CD4-positive, alpha-beta memory T cell (primary cell): ENCODE measurements at regions of chr4 and their contacts with region 1.

Region 1: GRCh38 chr4:184649026-184649970 is at the starts of genes CASP3 and PRIMPOL:
- DNase-seq: peak; percentile 92 to 95 (median 94)
- H3K4me3 ChIP-seq: peak within 1 kb of the TSS; percentile 81 to 85
- H3K4me3 Mint-ChIP-seq: peak within 1 kb of the TSS; percentile 92 to 98 (median 96)
- H3K27ac ChIP-seq: peak within 1 kb of the TSS; percentile 88
- H3K27ac Mint-ChIP-seq: peak within 1 kb of the TSS; percentile 90 to 97 (median 95)
- H3K4me1 ChIP-seq: peaks cover 51% of the 10 kb centered on the region
- H3K4me1 Mint-ChIP-seq: peaks cover 46 to 54% (median 50%) of the 10 kb centered on the region in 4 donors
- H3K27me3 ChIP-seq: no peaks in the 10 kb centered on the region
- H3K27me3 Mint-ChIP-seq: no peaks in the 10 kb centered on the region
- total RNA-seq, gene CASP3: 17.9 to 24.9 TPM
- total RNA-seq, gene PRIMPOL: 20.2 to 23.2 TPM

Region 2: GRCh38 chr4:184310171-184310567 is 339.1 kb before region 1 on chr4:
- CTCF ChIA-PET with region 1: interaction called, 3 read pairs
- POLR2A ChIA-PET with region 1: interaction called, 3 read pairs
- intact Hi-C with region 1: loop called (anchors 1 kb)
- DNase-seq: peak; percentile 46 to 61 (median 48)
- H3K4me3 ChIP-seq: no peak overlapping the region
- H3K4me3 Mint-ChIP-seq: peak overlapping the region in 7 of 8 donors; percentile 27 to 63 (median 53)
- H3K27ac ChIP-seq: no peak overlapping the region
- H3K27ac Mint-ChIP-seq: peak overlapping the region; percentile 17 to 94 (median 71)
- H3K4me1 ChIP-seq: peaks cover 15% of the 10 kb centered on the region
- H3K4me1 Mint-ChIP-seq: peaks cover 18 to 29% (median 24%) of the 10 kb centered on the region in 4 donors
- H3K27me3 ChIP-seq: no peaks in the 10 kb centered on the region
- H3K27me3 Mint-ChIP-seq: no peaks in the 10 kb centered on the region

Region 3: DNA sequence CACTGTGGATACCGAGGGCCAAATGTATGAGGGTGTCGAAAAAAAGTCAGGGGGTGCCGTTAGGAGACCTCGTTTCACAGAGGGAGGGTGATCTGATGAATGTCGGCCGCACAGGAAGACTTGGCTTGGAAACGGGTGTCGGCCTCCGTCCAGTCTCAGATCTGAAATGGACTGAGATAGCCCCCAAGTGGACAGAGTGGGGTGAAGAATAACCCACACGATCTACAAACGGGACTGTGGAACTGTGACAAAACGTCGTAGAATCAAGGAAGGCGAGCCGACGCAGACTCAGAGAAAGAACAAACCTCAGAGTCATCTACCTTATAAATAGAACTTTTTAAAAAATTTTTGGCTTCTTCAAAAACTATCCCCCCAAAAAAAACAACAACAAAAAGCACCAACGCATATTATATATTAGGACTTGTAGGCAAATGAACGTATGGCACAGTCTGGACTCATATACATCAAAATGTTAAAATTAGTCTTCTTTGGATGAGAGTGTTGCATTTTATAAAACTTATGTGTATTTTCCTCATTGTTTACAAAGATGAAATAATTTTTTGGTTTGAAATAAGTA is 111.2 kb before region 1 on chr4:
- CTCF ChIA-PET with region 1: interaction called, 4 read pairs
- POLR2A ChIA-PET with region 1: interaction called, 38 read pairs
- intact Hi-C with region 1: loop called (anchors 1 kb)
- DNase-seq: peak; percentile 59 to 71 (median 65)
- H3K4me3 ChIP-seq: peak overlapping the region; percentile 82 to 92
- H3K4me3 Mint-ChIP-seq: peak overlapping the region; percentile 91 to 98 (median 94)
- H3K27ac ChIP-seq: peak overlapping the region; percentile 98
- H3K27ac Mint-ChIP-seq: peak overlapping the region; percentile 94 to 100 (median 99)
- H3K4me1 ChIP-seq: peaks cover 37% of the 10 kb centered on the region
- H3K4me1 Mint-ChIP-seq: peaks cover 28 to 51% (median 35%) of the 10 kb centered on the region in 4 donors
- H3K27me3 ChIP-seq: no peaks in the 10 kb centered on the region
- H3K27me3 Mint-ChIP-seq: no peaks in the 10 kb centered on the region

Region 4: DNA sequence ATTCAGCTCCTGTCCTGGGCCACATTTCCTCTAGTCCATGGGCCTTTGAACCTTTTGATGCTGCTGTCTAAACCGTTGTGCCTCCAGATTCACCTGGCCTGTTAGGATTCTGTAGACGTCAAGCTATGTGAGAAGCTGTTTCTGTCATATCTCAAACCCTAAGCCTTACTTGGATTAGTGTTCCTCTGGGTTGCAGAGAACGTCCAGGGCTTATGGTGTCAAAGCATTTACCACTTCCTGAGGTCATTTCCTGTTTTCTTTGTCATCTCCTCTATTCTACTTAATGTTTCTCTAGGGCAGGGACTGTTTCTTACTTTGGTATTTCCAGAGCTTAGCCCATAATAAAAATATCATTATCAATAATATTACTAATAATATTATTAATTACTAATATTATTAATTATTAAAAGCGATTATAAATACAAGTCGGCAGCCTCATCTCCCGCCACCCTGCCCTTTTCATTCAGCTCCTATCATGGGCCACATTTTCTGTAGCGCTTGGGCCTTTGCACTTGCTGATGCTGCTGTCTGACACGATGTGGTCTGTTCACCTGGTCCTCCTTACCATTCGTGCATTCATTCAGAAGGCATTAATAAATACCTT is 19.3 kb after region 1 on chr4:
- CTCF ChIA-PET with region 1: interaction called, 13 read pairs
- POLR2A ChIA-PET with region 1: interaction called, 15 read pairs
- intact Hi-C with region 1: no loop called
- DNase-seq: peak in 4 of 5 donors; percentile 24 to 38 (median 32)
- H3K4me3 ChIP-seq: no peak overlapping the region
- H3K4me3 Mint-ChIP-seq: peak overlapping the region in 7 of 8 donors; percentile 25 to 77 (median 40)
- H3K27ac ChIP-seq: peak overlapping the region; percentile 5
- H3K27ac Mint-ChIP-seq: peak overlapping the region; percentile 54 to 94 (median 72)
- H3K4me1 ChIP-seq: peaks cover 24% of the 10 kb centered on the region
- H3K4me1 Mint-ChIP-seq: peaks cover 16 to 34% (median 30%) of the 10 kb centered on the region in 4 donors
- H3K27me3 ChIP-seq: no peaks in the 10 kb centered on the region
- H3K27me3 Mint-ChIP-seq: no peaks in the 10 kb centered on the region

Region 5: DNA sequence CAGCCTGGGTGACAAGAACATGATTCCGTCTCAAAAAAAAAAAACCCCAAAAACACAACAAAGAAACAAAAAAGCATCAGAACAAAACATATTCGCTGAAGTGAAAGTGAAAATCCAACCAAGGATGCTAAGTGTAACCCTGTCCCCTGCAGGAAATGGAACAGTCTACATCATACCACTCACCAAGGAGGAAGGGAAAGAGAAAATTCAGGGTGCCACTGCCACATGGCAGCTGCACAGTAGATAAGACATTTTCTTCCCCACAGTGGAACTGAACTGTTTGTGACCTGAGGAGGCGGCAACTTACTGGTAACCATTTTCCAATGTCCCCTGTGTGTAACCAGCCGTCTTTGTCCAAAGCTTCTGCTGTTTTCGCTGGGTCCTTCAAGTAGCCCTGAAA is 112.8 kb after region 1 on chr4:
- CTCF ChIA-PET with region 1: no interaction called
- POLR2A ChIA-PET with region 1: interaction called, 7 read pairs
- intact Hi-C with region 1: loop called (anchors 1 kb)
- DNase-seq: peak; percentile 57 to 79 (median 72)
- H3K4me3 ChIP-seq: peak overlapping the region in 1 of 2 donors; percentile 44
- H3K4me3 Mint-ChIP-seq: peak overlapping the region; percentile 59 to 85 (median 77)
- H3K27ac ChIP-seq: no peak overlapping the region
- H3K27ac Mint-ChIP-seq: peak overlapping the region; percentile 71 to 95 (median 87)
- H3K4me1 ChIP-seq: peaks cover 15% of the 10 kb centered on the region
- H3K4me1 Mint-ChIP-seq: peaks cover 6 to 19% (median 15%) of the 10 kb centered on the region in 4 donors
- H3K27me3 ChIP-seq: no peaks in the 10 kb centered on the region
- H3K27me3 Mint-ChIP-seq: no peaks in the 10 kb centered on the region

Region 6: GRCh38 chr4:184805462-184806228 is 156.3 kb after region 1 on chr4:
- CTCF ChIA-PET with region 1: no interaction called
- POLR2A ChIA-PET with region 1: no interaction called
- intact Hi-C with region 1: no loop called
- DNase-seq: no peak
- H3K4me3 ChIP-seq: no peak overlapping the region
- H3K4me3 Mint-ChIP-seq: no peak overlapping the region
- H3K27ac ChIP-seq: no peak overlapping the region
- H3K27ac Mint-ChIP-seq: no peak overlapping the region
- H3K4me1 ChIP-seq: no peaks in the 10 kb centered on the region
- H3K4me1 Mint-ChIP-seq: peaks cover 4 to 7% (median 5%) of the 10 kb centered on the region in 4 donors
- H3K27me3 ChIP-seq: no peaks in the 10 kb centered on the region
- H3K27me3 Mint-ChIP-seq: no peaks in the 10 kb centered on the region

Region 7: GRCh38 chr4:185005216-185005819 is 356.0 kb after region 1 on chr4:
- CTCF ChIA-PET with region 1: no interaction called
- POLR2A ChIA-PET with region 1: no interaction called
- intact Hi-C with region 1: loop called (anchors 1 kb)
- DNase-seq: peak; percentile 62 to 67 (median 64)
- H3K4me3 ChIP-seq: no peak overlapping the region
- H3K4me3 Mint-ChIP-seq: peak overlapping the region; percentile 30 to 72 (median 60)
- H3K27ac ChIP-seq: no peak overlapping the region
- H3K27ac Mint-ChIP-seq: peak overlapping the region in 1 of 7 donors; percentile 6
- H3K4me1 ChIP-seq: peaks cover 7% of the 10 kb centered on the region
- H3K4me1 Mint-ChIP-seq: peaks cover 4 to 12% (median 5%) of the 10 kb centered on the region in 4 donors
- H3K27me3 ChIP-seq: no peaks in the 10 kb centered on the region
- H3K27me3 Mint-ChIP-seq: peaks cover 25 to 42% of the 10 kb centered on the region in 2 donors

Region 8: DNA sequence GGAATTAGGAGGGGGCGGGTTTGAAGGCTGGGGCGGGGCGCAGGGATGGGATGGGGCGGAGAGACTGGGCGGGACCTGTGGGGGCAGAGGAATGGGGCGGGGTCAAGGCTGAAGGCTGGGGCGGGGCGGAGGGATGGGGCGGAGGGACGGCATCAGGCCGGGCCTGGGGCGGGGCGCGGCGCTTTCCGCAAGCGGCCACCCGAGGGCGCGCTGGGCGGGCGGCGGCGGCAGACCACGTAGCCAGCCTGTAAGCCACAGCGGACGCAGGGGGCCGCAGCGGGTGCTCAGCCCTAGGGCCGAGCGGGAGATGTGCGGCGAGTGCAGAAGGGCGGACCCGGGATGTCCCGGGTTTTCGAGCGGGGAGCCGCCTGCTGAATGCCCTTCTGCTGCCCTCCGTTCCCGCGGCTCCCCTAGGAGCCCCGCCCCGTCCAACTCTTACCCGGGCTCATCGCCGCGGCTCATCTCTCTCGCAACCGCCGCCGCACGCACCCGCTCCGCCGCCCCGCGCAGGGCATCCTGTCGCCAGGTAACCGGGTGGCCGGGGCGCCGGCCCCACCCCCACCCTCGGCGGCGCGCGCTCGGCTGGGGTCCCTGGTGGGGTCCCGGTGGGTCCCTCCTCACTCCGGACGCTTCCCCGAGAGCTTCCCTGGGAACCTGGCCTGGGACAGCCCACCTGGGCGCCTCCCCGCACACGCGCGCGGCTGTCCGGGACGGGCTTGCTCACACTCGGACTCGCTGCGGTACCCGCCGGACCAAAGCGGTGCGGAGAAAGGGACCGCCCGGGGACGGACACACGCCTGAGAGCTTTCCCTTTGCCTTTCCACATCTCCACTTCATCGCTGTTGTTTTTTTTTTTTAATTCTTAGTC is 822.2 kb after region 1 on chr4 and contains the start of gene CCDC110:
- CTCF ChIA-PET with region 1: no interaction called
- POLR2A ChIA-PET with region 1: no interaction called
- intact Hi-C with region 1: loop called (anchors 1 kb)
- DNase-seq: peak; percentile 83 to 90 (median 87)
- H3K4me3 ChIP-seq: peak within 1 kb of the TSS; percentile 72 to 88
- H3K4me3 Mint-ChIP-seq: peak within 1 kb of the TSS; percentile 88 to 94 (median 92)
- H3K27ac ChIP-seq: peak within 1 kb of the TSS; percentile 28
- H3K27ac Mint-ChIP-seq: peak within 1 kb of the TSS; percentile 69 to 93 (median 90)
- H3K4me1 ChIP-seq: peaks cover 16% of the 10 kb centered on the region
- H3K4me1 Mint-ChIP-seq: peaks cover 6 to 17% (median 10%) of the 10 kb centered on the region in 4 donors
- H3K27me3 ChIP-seq: no peaks in the 10 kb centered on the region
- H3K27me3 Mint-ChIP-seq: peaks cover 0 to 2% of the 10 kb centered on the region in 2 donors
- total RNA-seq, gene CCDC110: 0.19 to 0.90 TPM